ENCODE measurements at regions of chr2 and their contacts with region 1.

Region 1: DNA sequence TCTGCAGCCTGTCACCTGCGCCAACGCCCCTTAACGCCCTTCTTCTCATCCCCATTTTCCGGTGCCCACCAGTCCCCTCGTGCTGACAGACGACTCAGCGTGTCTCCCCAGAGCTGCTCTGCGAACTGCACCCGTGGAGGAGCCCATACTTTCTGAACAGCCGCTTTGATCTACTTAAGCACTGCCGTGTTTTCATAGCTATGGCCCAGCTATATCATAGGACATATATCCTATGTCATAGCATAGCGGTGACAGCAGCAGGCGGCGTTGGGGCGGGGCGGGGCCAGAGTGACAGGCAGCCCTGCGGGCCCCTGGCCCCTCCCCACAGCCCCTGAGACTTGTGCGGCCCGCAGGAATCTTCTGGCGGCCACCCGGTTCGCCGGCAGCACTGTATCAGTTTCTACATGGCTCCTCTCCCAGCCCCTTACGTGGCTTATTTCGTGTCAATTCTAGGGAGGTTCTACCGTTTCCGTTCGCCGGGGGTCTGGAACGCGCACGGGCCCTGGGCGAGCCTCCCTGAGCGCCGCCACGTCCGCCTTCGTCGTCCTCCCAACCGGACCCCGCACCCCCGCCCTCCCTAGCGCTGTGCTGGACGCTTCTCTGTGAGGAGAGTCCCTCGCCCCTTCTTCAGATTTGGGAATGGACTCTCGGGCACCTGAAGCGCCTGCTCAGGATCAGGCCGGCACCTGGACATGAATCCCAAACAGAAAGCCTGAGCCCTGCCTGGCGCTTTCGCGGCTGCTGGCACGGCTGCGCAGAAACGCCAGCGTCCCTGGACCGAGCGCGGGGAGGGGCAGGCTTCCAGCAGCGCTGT is 35.4 kb downstream of the PTPN18 start:
- DNase-seq: peak; percentile 47
- ATAC-seq: peak; percentile 90
- H3K4me3 ChIP-seq: peak overlapping the region; percentile 59 to 67
- H3K27ac ChIP-seq: peak overlapping the region; percentile 59
- H3K4me1 ChIP-seq: peaks cover 14 to 27% of the 10 kb centered on the region in 2 experiments
- H3K27me3 ChIP-seq: no peaks in the 10 kb centered on the region
- CTCF ChIP-seq: no peak
- POLR2A ChIP-seq: peak; percentile 70
- RAD21 ChIP-seq: no peak

Region 2: DNA sequence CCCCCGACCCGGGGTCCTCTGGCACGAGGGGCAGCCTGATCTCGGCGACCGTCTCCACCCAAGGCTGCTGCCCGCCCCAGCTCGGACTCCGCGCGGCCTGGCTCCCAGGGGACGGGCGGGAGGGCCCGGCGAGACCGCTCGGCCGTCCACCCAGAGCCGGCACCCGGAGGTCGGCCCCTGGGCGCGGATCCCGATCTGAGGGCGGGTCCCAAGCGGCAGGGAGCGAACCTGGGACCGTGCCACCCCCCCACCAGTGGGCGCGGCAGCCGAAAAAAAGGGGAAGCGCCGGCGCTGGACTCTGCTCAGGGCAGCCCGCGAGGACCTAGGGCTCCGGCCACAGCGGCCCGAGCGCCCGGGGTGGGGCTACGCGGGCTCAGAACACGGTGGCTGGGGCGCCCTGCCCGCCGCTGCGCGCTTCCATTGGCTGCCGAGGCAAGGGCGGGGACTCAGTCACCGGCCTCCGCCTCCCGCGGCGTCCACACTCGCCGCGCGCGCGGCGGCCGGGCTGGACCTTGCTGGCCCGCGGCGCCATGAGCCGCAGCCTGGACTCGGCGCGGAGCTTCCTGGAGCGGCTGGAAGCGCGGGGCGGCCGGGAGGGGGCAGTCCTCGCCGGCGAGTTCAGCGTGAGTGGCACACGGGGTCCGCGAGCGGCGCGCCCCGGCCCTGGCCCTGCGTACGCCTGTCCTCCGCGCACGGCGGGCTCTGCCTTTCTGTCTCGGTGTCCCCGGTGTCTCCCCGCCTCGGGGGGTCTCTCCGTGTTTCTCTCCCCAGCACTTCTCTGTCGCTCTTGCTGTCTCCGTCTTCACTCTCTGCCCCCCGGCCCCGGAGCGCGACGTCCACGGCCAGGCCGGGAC is 35.5 kb before region 1 on chr2 and contains the start of gene PTPN18:
- CTCF ChIA-PET with region 1: no interaction called
- POLR2A ChIA-PET with region 1: no interaction called
- RAD21 ChIA-PET with region 1: no interaction called
- intact Hi-C with region 1: loop called (anchors 1 kb)
- DNase-seq: peak; percentile 58
- ATAC-seq: peak; percentile 94
- H3K4me3 ChIP-seq: peak within 1 kb of the TSS; percentile 57 to 81
- H3K27ac ChIP-seq: peak within 1 kb of the TSS; percentile 61; the same call in 1 of the 2 replicates
- H3K4me1 ChIP-seq: peaks cover 0 to 19% of the 10 kb centered on the region in 2 experiments; a peak in 2 of 4 replicates
- H3K27me3 ChIP-seq: no peaks in the 10 kb centered on the region
- CTCF ChIP-seq: peak; percentile 13 to 41 (median 34); a peak in 4 of 6 replicates
- POLR2A ChIP-seq: peak; percentile 96
- RAD21 ChIP-seq: peak; percentile 34; the same call in 1 of the 2 replicates
- total RNA-seq, gene PTPN18: 52.4 TPM